ENCODE measurements at regions of chr4 and their contacts with region 1.

Region 1: DNA sequence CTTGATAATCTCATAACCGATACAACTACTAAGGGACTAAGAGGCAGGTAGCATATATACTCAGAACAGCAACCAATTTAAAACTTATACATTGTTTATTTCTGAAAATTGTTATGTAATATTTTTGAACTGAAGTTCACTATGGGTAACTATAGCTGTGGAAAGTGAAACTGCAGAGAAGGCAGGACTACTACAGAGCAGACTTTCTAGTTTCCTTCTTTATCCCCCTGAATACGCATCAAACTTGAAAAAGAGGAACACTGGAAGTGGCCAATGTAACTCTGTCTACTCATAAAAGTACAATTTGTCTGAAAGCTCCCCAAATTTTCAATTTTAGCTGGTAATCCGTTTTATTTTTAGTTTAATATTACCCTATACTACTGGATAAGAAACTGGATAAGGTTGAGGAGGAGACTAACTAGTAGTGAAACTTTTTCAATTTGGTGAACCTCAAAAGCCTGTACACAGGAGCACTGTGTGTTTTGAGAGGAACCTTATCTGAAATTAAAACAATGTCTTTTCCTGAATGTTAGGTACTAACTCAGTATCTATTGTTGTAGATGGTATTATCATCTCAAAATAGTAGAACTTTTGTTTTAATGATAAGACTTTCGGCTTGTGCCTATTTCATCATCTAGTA is 225.8 kb downstream of the GABRG1 start:
- DNase-seq: no peak
- H3K4me3 ChIP-seq: no peak overlapping the region
- CTCF ChIP-seq: no peak

Region 2: GRCh38 chr4:45855887-45856286 is 42.2 kb before region 1 on chr4:
- in situ Hi-C with region 1: no loop called
- DNase-seq: no peak
- H3K4me3 ChIP-seq: no peak overlapping the region
- CTCF ChIP-seq: no peak

Region 3: GRCh38 chr4:45931154-45931553 is 33.1 kb after region 1 on chr4:
- in situ Hi-C with region 1: loop called (anchors 5 kb)
- DNase-seq: no peak
- H3K4me3 ChIP-seq: no peak overlapping the region
- CTCF ChIP-seq: no peak

Region 4: GRCh38 chr4:46993075-46994006 is 1095.3 kb after region 1 on chr4 and contains the start of gene GABRA4:
- in situ Hi-C with region 1: no loop called
- DNase-seq: no peak
- H3K4me3 ChIP-seq: peak within 1 kb of the TSS; percentile 61
- CTCF ChIP-seq: no peak

Measured in astrocyte of the cerebellum (primary cell).